ENCODE measurements at regions of chr16 and their contacts with region 1.

Region 1: DNA sequence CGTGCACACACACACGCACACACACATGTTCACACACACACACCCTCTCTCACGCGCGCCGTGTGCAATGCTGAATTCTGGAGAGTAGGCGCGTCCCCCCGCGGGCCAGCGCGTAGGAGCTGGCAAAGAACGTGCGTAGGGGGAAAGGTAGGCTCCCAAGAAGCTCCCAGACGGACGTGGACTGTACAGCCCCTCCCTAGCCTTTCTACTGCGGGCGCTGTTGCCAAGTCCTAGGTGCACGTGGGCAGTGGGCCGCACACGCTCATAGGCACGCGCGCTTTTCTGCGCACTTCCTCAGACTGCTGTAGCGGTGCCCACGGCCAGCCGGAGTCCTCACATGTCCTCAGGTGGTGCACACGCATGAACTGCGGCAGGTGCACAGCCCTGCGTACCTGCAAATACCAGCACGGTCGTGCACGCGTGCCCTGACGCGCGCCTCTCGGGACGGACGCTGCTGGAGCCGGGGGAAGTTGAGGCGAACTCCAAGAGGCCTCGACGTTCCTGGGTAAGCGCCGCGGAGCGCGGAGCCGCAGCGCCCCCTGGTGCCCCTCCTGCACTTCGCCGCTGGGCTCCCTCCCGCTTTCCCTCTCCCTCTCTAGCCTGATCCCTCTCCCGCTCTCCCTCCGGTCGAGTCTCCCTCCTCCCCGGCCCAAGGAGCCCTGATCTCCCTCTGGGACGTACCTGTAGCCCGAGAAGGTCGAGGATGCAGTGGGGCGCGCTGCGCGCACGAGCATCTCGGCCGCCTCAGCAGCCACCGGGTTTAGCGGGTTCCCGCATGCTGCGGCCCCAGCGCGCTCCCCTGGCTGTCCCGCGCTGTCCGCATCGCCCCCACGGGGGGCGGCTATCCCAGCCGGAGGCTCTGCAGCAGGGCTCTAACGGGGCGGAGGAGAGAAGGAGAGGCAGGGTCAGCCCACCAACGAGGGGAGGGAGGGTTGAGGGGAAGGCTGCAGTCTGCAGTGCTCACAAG is 749 bp downstream of the GRIN2A start:
- DNase-seq: peak in 1 of 2 donors; percentile 16
- ATAC-seq: peak in 1 of 2 donors; percentile 39
- H3K4me3 ChIP-seq: peak overlapping the region in 2 of 4 donors; percentile 17 to 25
- H3K27ac ChIP-seq: no peak overlapping the region
- H3K4me1 ChIP-seq: peaks cover 0 to 8% of the 10 kb centered on the region in 2 donors
- H3K27me3 ChIP-seq: peaks cover 32 to 45% (median 44%) of the 10 kb centered on the region in 3 donors
- CTCF ChIP-seq: peak; percentile 46 to 78 (median 69)
- POLR2A ChIP-seq: no peak

Region 2: DNA sequence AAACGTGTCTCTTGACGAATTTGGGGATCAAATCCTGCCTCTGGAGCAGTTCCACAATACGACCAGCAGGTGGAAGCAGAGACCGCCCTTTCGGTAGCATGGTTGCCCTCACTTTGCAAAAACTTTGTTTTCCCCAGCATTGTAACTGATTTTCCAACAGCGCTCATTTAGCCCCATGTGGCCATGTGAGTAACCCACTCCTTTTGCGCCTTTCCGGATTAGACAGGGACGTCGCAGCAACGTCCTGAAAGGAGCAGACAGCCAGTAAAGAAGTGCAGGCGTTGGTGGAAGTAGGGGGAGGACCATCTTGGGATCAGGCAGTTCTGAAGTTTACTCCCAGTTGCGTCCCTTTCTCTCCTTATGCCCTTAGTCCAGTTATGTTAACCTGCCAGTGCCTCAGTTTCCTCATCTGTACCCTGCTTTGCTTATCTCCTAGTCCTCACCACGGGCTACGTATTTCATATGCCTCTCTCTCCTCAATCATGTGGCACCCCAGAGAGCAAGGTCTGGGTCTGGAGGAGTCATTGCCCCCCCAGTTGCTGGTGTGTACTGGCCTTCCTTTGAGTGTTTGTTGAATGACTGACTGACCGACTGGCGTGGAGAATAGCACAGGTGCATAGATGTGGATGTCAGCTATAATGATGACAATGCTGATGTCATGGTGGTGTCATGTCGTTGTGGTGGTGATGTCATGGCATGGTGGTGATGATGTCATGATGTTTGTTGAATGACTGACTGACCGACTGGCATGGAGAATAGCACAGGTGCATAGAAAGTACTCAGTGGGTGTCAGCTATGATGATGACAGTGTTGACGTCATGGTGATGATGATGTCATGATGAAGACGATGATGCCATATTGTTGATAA is 1613.5 kb before region 1 on chr16:
- in situ Hi-C with region 1: no loop called
- intact Hi-C with region 1: loop called (anchors 5 kb)
- DNase-seq: peak; percentile 29 to 43
- ATAC-seq: peak; percentile 81 to 93
- H3K4me3 ChIP-seq: no peak overlapping the region
- H3K27ac ChIP-seq: no peak overlapping the region
- H3K4me1 ChIP-seq: no peaks in the 10 kb centered on the region
- H3K27me3 ChIP-seq: peaks cover 0 to 16% (median 7%) of the 10 kb centered on the region in 3 donors
- CTCF ChIP-seq: peak; percentile 88 to 95 (median 91)
- POLR2A ChIP-seq: no peak

Region 3: DNA sequence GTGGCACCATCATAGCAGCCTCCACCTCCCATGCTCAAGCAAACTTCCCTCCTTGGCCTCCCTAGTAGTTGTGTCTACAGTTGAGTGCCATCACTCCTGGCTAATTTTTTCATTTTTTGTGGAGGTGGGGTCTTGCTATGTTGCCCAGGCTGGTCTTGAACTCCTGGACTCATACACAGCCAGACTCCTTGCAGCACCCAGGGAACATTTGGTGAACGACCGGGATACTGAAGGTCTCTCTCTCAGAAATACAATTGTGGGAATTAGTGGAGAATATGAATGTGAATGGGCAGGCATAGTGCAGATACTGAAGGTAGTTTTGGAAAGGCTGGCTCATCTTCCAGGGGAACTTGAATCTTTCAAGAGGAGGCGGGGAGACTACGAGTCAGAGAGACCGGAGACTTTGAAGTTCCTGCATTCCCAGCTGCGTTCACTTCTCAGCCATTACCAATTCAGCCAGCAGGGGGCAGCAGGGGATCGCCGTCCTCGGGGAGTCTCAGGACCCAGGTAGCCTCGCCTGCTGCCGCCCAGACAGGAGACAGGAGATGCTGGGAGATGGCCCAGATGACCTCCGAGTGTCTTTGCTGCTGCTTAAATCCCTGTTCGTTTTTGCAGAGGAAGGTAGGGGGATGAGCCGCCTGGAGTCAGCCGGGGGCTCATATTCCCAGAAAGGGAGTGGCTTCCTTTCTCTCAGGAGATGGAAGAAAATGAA is 1021.5 kb before region 1 on chr16:
- in situ Hi-C with region 1: loop called in 1 of 4 experiments (anchors 25 kb)
- intact Hi-C with region 1: loop called (anchors 5 kb)
- DNase-seq: no peak
- ATAC-seq: no peak
- H3K4me3 ChIP-seq: no peak overlapping the region
- H3K27ac ChIP-seq: no peak overlapping the region
- H3K4me1 ChIP-seq: no peaks in the 10 kb centered on the region
- H3K27me3 ChIP-seq: peaks cover 0 to 4% (median 0%) of the 10 kb centered on the region in 3 donors
- CTCF ChIP-seq: peak in 3 of 5 experiments; percentile 35 to 52 (median 38)
- POLR2A ChIP-seq: no peak

Region 4: DNA sequence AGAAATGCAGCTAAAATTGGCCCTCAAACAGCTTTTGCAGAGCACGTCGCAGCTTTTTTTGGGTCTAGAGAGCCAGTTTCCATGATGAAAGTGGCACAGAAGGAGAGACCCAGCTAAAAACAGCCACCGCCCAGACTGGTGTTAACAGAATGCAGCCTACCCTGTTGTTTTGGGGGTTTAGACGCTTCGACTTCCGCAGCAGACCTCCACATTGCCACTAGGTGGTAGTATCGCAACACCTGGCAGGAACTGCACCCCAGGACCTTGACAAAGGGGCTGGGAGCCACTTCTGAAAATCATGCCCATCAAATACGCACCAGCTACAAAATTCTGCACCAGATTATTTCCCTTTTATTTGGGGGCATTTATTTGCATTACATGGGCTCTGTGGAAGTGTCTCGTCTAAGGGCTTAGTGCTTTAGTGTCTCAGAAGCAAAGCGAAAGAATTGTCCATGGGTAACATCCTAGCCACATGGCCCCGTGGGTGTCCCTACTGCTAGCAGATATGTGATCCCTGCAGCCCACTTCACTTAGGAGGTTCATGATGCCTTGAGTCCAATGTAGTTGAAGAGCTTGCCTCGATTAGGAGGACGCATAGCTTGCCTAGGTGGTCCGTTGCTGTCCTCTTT is 922.9 kb before region 1 on chr16:
- in situ Hi-C with region 1: loop called in 1 of 4 experiments (anchors 25 kb)
- intact Hi-C with region 1: no loop called
- DNase-seq: no peak
- ATAC-seq: no peak
- H3K4me3 ChIP-seq: no peak overlapping the region
- H3K27ac ChIP-seq: no peak overlapping the region
- H3K4me1 ChIP-seq: no peaks in the 10 kb centered on the region
- H3K27me3 ChIP-seq: peaks cover 0 to 2% (median 0%) of the 10 kb centered on the region in 3 donors
- CTCF ChIP-seq: peak in 4 of 5 experiments; percentile 16 to 43 (median 34)
- POLR2A ChIP-seq: no peak

Region 5: DNA sequence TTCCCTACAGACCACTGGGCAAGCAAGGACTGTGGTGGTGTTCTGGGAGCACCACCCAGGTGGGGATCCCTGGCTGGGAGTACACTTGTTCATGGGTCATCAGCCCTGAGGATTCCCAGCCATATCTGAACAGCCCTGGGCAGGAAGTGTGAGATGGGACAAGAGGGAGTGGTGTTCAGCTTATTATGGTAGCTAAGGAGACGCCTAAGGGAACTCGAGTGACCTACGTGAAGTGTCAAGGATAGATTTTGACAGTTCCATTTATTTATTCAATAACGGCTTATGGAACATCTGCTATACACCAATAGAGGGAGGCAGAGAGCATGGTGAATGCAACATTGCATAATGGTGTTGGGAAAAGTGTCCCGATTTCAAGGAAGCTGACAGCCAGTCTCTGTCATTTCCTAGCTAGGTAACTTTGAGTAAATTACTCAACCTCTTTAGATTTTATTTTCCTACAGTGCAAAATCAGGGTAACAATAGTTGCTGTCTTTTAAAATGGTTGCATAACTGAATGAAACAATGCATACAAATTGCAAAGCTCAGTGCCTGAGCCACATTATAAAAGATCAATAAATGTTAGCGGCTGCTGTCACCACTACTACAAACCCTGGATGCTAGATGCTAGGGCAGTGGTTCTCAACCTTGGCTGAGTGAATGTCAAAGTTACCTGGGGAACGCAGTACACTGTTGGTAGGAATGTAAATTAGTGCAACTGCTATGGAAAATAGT is 533.3 kb before region 1 on chr16:
- in situ Hi-C with region 1: loop called in 1 of 4 experiments (anchors 10 kb)
- intact Hi-C with region 1: no loop called
- DNase-seq: no peak
- ATAC-seq: no peak
- H3K4me3 ChIP-seq: no peak overlapping the region
- H3K27ac ChIP-seq: no peak overlapping the region
- H3K4me1 ChIP-seq: no peaks in the 10 kb centered on the region
- H3K27me3 ChIP-seq: no peaks in the 10 kb centered on the region
- CTCF ChIP-seq: peak in 4 of 5 experiments; percentile 34 to 49 (median 47)
- POLR2A ChIP-seq: no peak